H1 (cell line): ENCODE measurements at regions of chr12 and their contacts with region 1.

Region 1: DNA sequence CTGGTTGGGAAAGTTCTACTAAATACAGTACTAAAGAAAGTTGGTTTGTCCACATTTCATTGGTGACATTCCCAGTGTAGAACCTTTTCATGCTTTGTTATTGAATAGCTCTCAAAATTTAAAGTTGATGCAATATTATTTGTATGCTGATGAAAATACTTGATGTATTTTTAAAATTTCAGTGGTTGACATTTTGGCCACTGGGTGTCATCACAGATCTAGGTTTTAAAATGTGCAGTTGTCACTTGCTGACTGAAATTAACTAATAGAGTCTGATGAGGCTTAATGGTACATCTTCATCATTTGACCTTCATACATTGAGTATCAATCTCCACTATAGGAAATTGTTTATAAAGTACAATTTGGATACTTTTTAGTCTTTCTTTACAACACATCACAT is 37.1 kb downstream of the CMAS start:
- DNase-seq: no peak
- H3K4me3 ChIP-seq: no peak overlapping the region
- H3K27ac ChIP-seq: no peak overlapping the region
- H3K4me1 ChIP-seq: 0 out of 7 replicates have a peak, but pooled peaks cover 0 to 2% (median 0%) of the 10 kb centered on the region in 4 experiments
- H3K27me3 ChIP-seq: no peaks in the 10 kb centered on the region
- CTCF ChIP-seq: peak in 2 of 3 experiments; percentile 12 to 38; a peak in 2 of 4 replicates
- EP300 ChIP-seq: no peak
- POLR2A ChIP-seq: no peak
- RAD21 ChIP-seq: peak; percentile 61 to 66

Region 2: GRCh38 chr12:22443379-22444316 is 360.5 kb after region 1 on chr12:
- CTCF ChIA-PET with region 1: interaction called, 16 read pairs
- POLR2A ChIA-PET with region 1: no interaction called
- DNase-seq: peak; percentile 39 to 52
- H3K4me3 ChIP-seq: no peak overlapping the region
- H3K27ac ChIP-seq: no peak overlapping the region
- H3K4me1 ChIP-seq: no peaks in the 10 kb centered on the region
- H3K27me3 ChIP-seq: no peaks in the 10 kb centered on the region
- CTCF ChIP-seq: peak; percentile 51 to 93 (median 91)
- EP300 ChIP-seq: no peak
- POLR2A ChIP-seq: no peak
- RAD21 ChIP-seq: peak; percentile 96 to 99